K562 (cell line): ENCODE measurements at regions of chr12 and their contacts with region 1.

Region 1: DNA sequence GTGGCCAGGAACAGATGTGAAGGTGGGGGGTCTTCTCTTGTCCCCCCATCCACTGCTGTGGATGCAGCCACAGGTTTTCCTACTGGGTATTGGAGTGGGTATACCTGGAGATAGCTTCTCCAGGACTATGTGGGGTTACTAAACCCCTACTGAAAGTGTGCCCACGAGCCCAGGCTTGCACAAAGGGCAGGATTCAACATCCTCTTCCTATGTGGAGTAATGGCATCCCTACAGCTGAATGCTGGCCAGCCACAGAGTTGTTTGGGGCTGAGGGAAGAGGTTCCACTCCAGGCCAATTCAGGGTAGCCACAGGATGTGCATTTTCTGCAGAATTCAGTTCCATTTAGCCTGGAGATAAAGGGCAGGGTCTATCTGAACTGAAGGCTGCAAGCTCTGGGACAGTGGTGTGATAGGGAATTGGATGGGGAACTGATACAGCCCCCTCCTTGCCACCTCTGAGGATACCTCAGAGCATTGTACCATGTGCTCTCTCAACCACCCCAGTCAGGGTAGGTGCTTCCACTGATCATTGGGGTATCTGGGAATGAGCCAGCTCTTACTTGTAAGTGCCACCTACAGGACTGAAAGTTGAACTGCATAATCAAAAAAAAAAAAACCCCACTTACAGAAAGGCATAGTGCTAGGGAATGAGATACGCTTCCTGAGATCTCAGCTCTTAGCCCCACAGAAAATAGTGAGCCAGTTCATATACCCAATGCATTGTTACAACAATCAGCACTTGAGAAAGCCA is 187.1 kb downstream of the KITLG start:
- DNase-seq: peak in 2 of 4 experiments; percentile 10 to 18
- ATAC-seq: peak; percentile 56
- H3K4me3 ChIP-seq: no peak overlapping the region
- H3K27ac ChIP-seq: no peak overlapping the region
- H3K4me1 ChIP-seq: no peaks in the 10 kb centered on the region
- H3K27me3 ChIP-seq: no peaks in the 10 kb centered on the region
- CTCF ChIP-seq: peak; percentile 7 to 26 (median 23); a peak in 1 of 6 replicates
- EP300 ChIP-seq: no peak
- POLR2A ChIP-seq: no peak
- RAD21 ChIP-seq: peak; percentile 23 to 56; a peak in 3 of 4 replicates

Region 2: DNA sequence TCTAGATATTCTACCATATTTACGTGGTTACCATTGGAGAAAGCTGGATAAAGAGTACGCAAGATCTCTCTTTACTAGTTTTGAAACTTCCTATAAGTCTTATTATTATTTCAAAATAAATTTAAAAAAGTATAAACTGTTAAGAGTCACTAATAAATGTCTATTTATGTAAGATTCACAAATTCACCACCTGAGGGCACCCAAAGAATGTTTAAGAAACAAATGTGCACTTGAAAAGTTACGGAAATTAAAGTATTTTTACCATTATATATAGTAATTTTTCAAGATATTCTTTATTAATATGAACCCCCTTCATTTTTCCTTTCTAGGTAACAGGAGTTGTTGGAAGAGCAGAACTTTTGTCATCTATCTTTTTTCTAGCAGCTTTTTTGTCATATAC is 239.2 kb before region 1 on chr12:
- CTCF ChIA-PET with region 1: no interaction called
- POLR2A ChIA-PET with region 1: no interaction called
- in situ Hi-C with region 1: no loop called
- intact Hi-C with region 1: loop called (anchors 2 kb)
- DNase-seq: no peak
- ATAC-seq: no peak
- H3K4me3 ChIP-seq: no peak overlapping the region
- H3K27ac ChIP-seq: no peak overlapping the region
- H3K4me1 ChIP-seq: no peaks in the 10 kb centered on the region
- H3K27me3 ChIP-seq: no peaks in the 10 kb centered on the region
- CTCF ChIP-seq: peak in 1 of 3 experiments; percentile 29; a peak in 2 of 6 replicates
- EP300 ChIP-seq: no peak
- POLR2A ChIP-seq: no peak
- RAD21 ChIP-seq: peak; percentile 49 to 55

Region 3: GRCh38 chr12:88600272-88600671 is 207.1 kb after region 1 on chr12:
- CTCF ChIA-PET with region 1: no interaction called
- POLR2A ChIA-PET with region 1: no interaction called
- in situ Hi-C with region 1: no loop called
- intact Hi-C with region 1: no loop called
- DNase-seq: no peak
- ATAC-seq: no peak
- H3K4me3 ChIP-seq: no peak overlapping the region
- H3K27ac ChIP-seq: no peak overlapping the region
- H3K4me1 ChIP-seq: no peaks in the 10 kb centered on the region
- H3K27me3 ChIP-seq: no peaks in the 10 kb centered on the region
- CTCF ChIP-seq: no peak
- EP300 ChIP-seq: no peak
- POLR2A ChIP-seq: no peak
- RAD21 ChIP-seq: no peak